ENCODE measurements at regions of chr17 and their contacts with region 1.

Region 1: DNA sequence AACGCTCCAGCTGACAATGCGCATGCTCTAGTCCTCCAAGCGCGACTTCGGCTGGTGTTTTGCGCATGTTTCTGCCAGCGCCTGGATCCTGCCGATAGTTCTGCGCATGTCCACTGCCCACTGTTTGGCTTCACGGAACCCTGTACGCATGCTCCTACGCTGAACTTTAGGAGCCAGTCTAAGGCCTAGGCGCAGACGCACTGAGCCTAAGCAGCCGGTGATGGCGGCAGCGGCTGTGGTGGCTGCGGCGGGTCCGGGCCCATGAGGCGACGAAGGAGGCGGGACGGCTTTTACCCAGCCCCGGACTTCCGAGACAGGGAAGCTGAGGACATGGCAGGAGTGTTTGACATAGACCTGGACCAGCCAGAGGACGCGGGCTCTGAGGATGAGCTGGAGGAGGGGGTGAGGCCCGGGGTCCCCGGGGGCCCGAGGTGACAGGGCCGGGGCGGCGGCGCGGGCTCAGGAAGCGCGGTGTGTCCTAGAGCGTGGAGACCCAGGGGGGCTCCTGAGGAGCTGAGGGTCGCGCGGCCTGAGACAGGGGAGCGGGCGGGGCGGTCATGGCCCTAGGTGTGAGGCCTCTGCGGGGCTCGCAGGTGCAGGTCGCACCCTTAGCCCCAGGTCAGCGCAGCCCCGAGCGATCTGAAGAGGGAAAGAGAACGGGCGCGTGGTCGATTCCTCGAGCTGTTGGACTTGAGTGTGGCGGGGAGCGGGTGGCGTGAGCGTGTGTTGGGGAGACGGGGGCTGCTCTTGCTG is at the starts of genes RPS6KB1 and TUBD1:
- DNase-seq: peak; percentile 100
- ATAC-seq: peak; percentile 89
- H3K4me3 ChIP-seq: peak within 1 kb of the TSS; percentile 74 to 96 (median 82)
- H3K4me3 Mint-ChIP-seq: peak within 1 kb of the TSS; percentile 98
- H3K27ac ChIP-seq: peak within 1 kb of the TSS; percentile 94 to 95
- H3K27ac Mint-ChIP-seq: peak within 1 kb of the TSS; percentile 99
- H3K4me1 ChIP-seq: peaks cover 19 to 23% of the 10 kb centered on the region in 2 donors
- H3K4me1 Mint-ChIP-seq: peaks cover 52% of the 10 kb centered on the region
- H3K27me3 ChIP-seq: no peaks in the 10 kb centered on the region
- H3K27me3 Mint-ChIP-seq: no peaks in the 10 kb centered on the region
- CTCF ChIP-seq: no peak
- total RNA-seq, gene RPS6KB1: 69.7 and 84.9 TPM in 2 replicates
- total RNA-seq, gene TUBD1: 19.7 and 20.0 TPM in 2 replicates

Region 2: DNA sequence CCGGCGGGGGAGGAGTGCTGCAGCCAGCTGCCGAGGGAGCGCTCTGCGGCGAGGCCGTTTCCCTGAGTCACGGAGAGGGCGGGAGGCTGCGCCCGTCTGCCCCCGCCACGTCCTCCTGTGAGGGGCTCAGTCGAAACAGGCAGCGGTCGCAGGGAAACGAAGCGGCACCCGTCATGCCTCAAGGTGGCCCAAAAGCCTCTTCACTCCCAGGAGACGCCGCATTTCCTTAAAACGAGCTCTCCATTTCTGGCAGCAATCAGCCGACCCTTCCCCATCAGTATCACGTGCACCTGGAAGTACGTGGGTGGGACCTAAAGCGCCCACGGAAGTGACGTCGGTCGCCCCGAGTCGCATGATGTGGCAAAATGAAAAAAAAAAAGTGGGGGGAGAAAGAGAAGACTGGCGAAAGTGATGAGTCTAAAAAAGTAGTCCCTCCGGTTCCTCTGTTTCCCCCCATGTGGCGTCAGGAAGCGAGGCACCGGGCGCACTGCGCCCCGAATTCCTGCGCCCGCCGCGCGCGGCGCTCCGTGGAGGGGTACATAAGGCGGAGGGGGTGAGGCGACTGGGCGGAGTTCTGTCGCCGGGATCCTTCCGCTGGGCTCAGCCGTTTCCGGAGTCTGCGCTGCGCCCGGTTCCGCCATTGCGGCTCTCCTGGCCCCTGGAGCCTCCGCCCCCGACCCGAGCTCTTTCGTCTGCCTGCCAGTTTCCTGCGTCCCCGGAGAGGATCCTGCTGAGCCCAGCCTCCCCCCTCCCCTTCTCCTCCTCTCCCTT is 273.6 kb before region 1 on chr17 and contains the start of gene CLTC:
- CTCF ChIA-PET with region 1: no interaction called
- POLR2A ChIA-PET with region 1: no interaction called
- intact Hi-C with region 1: loop called (anchors 1 kb)
- DNase-seq: peak; percentile 100
- ATAC-seq: peak; percentile 80
- H3K4me3 ChIP-seq: peak within 1 kb of the TSS; percentile 69 to 100 (median 99)
- H3K4me3 Mint-ChIP-seq: peak within 1 kb of the TSS; percentile 90
- H3K27ac ChIP-seq: peak within 1 kb of the TSS; percentile 96 to 99
- H3K27ac Mint-ChIP-seq: peak within 1 kb of the TSS; percentile 97
- H3K4me1 ChIP-seq: peaks cover 44 to 48% of the 10 kb centered on the region in 2 donors
- H3K4me1 Mint-ChIP-seq: peaks cover 47% of the 10 kb centered on the region
- H3K27me3 ChIP-seq: no peaks in the 10 kb centered on the region
- H3K27me3 Mint-ChIP-seq: no peaks in the 10 kb centered on the region
- CTCF ChIP-seq: no peak
- total RNA-seq, gene CLTC: 114 and 126 TPM in 2 replicates

Region 3: GRCh38 chr17:59837308-59838051 is 55.6 kb before region 1 on chr17:
- CTCF ChIA-PET with region 1: interaction called, 3 read pairs
- POLR2A ChIA-PET with region 1: no interaction called
- intact Hi-C with region 1: loop called (anchors 2 kb)
- DNase-seq: peak; percentile 88
- ATAC-seq: peak; percentile 90
- H3K4me3 ChIP-seq: peak overlapping the region; percentile 31 to 62 (median 50)
- H3K4me3 Mint-ChIP-seq: peak overlapping the region; percentile 92
- H3K27ac ChIP-seq: peak overlapping the region; percentile 85 to 90
- H3K27ac Mint-ChIP-seq: peak overlapping the region; percentile 97
- H3K4me1 ChIP-seq: peaks cover 33 to 45% of the 10 kb centered on the region in 2 donors
- H3K4me1 Mint-ChIP-seq: peaks cover 65% of the 10 kb centered on the region
- H3K27me3 ChIP-seq: no peaks in the 10 kb centered on the region
- H3K27me3 Mint-ChIP-seq: no peaks in the 10 kb centered on the region
- CTCF ChIP-seq: no peak

Region 4: GRCh38 chr17:59914274-59914854 is 21.3 kb after region 1 on chr17:
- CTCF ChIA-PET with region 1: interaction called, 18 read pairs
- POLR2A ChIA-PET with region 1: no interaction called
- intact Hi-C with region 1: no loop called
- DNase-seq: peak; percentile 61
- ATAC-seq: peak; percentile 51
- H3K4me3 ChIP-seq: no peak overlapping the region
- H3K4me3 Mint-ChIP-seq: no peak overlapping the region
- H3K27ac ChIP-seq: no peak overlapping the region
- H3K27ac Mint-ChIP-seq: no peak overlapping the region
- H3K4me1 ChIP-seq: no peaks in the 10 kb centered on the region
- H3K4me1 Mint-ChIP-seq: no peaks in the 10 kb centered on the region
- H3K27me3 ChIP-seq: no peaks in the 10 kb centered on the region
- H3K27me3 Mint-ChIP-seq: no peaks in the 10 kb centered on the region
- CTCF ChIP-seq: peak; percentile 77

Region 5: GRCh38 chr17:59950049-59950448 is 56.9 kb after region 1 on chr17:
- CTCF ChIA-PET with region 1: no interaction called
- POLR2A ChIA-PET with region 1: no interaction called
- intact Hi-C with region 1: no loop called
- DNase-seq: no peak
- ATAC-seq: no peak
- H3K4me3 ChIP-seq: no peak overlapping the region
- H3K4me3 Mint-ChIP-seq: no peak overlapping the region
- H3K27ac ChIP-seq: no peak overlapping the region
- H3K27ac Mint-ChIP-seq: no peak overlapping the region
- H3K4me1 ChIP-seq: no peaks in the 10 kb centered on the region
- H3K4me1 Mint-ChIP-seq: peaks cover 8% of the 10 kb centered on the region
- H3K27me3 ChIP-seq: no peaks in the 10 kb centered on the region
- H3K27me3 Mint-ChIP-seq: no peaks in the 10 kb centered on the region
- CTCF ChIP-seq: no peak

Region 6: DNA sequence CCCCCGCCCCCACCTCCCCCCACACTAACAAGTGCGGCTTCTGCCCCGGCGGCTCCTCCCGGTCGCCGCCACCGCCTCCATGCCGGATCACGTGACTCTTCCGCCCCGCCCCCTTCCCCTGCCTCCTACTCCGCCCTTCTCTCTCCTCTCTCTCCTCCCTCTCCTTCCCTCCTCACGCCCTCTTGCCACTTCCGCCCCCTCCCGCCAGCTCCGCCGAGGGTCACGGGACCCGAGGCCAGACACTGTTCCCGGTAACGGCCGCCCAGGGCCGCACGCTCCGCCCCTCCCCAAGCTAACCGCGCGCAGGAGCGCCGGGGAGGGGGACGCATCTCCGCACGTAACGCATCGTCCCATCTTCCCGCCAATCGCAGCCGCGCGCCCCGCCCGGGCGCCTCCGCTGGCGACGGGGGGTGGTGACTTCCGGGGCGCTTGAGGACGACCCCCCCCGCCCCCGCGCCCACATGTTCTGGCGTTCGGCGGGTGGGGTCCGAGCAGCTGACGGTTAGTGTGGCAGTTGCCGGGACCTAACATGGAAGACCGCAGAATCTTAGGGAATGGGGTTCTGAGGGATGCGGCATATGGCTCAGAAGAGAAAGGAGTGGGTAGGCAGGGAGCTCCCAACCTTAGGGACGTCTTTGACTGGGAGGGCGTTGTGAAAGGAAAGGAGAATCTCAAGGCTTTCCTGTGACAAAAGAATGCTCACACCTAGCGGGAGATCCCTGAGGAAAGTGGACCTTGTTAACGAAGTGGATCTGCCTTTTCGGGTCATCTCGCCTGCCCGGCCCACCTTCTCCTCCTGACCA is 499.1 kb after region 1 on chr17 and contains the start of gene USP32:
- CTCF ChIA-PET with region 1: no interaction called
- POLR2A ChIA-PET with region 1: interaction called, 3 read pairs
- intact Hi-C with region 1: loop called (anchors 5 kb)
- DNase-seq: peak; percentile 98
- ATAC-seq: peak; percentile 88
- H3K4me3 ChIP-seq: peak within 1 kb of the TSS; percentile 71 to 95 (median 87)
- H3K4me3 Mint-ChIP-seq: peak within 1 kb of the TSS; percentile 96
- H3K27ac ChIP-seq: peak within 1 kb of the TSS; percentile 92 to 96
- H3K27ac Mint-ChIP-seq: peak within 1 kb of the TSS; percentile 97
- H3K4me1 ChIP-seq: peaks cover 43 to 44% of the 10 kb centered on the region in 2 donors
- H3K4me1 Mint-ChIP-seq: peaks cover 67% of the 10 kb centered on the region
- H3K27me3 ChIP-seq: no peaks in the 10 kb centered on the region
- H3K27me3 Mint-ChIP-seq: no peaks in the 10 kb centered on the region
- CTCF ChIP-seq: no peak
- total RNA-seq, gene USP32: 48.8 and 56.9 TPM in 2 replicates